ENCODE measurements at regions of chr19 and their contacts with region 1.

Region 1: GRCh38 chr19:14347999-14348889 is 33.0 kb upstream of the ADGRE5 start:
- DNase-seq: peak; percentile 61 to 75
- ATAC-seq: peak; percentile 72 to 90 (median 84)
- H3K4me3 ChIP-seq: peak overlapping the region in 8 of 10 donors; percentile 14 to 37 (median 28)
- H3K27ac ChIP-seq: no peak overlapping the region
- H3K4me1 ChIP-seq: peaks cover 0 to 12% (median 0%) of the 10 kb centered on the region in 9 donors
- H3K27me3 ChIP-seq: peaks cover 0 to 4% (median 0%) of the 10 kb centered on the region in 7 donors
- CTCF ChIP-seq: peak; percentile 93 to 99 (median 96)

Region 2: GRCh38 chr19:14183741-14184350 is 164.4 kb before region 1 on chr19:
- intact Hi-C with region 1: loop called in 1 of 10 experiments (anchors 10 kb)
- DNase-seq: no peak
- ATAC-seq: peak in 2 of 8 donors; percentile 13 to 14
- H3K4me3 ChIP-seq: no peak overlapping the region
- H3K27ac ChIP-seq: no peak overlapping the region
- H3K4me1 ChIP-seq: peaks cover 0 to 6% (median 0%) of the 10 kb centered on the region in 9 donors
- H3K27me3 ChIP-seq: no peaks in the 10 kb centered on the region
- CTCF ChIP-seq: no peak

Region 3: DNA sequence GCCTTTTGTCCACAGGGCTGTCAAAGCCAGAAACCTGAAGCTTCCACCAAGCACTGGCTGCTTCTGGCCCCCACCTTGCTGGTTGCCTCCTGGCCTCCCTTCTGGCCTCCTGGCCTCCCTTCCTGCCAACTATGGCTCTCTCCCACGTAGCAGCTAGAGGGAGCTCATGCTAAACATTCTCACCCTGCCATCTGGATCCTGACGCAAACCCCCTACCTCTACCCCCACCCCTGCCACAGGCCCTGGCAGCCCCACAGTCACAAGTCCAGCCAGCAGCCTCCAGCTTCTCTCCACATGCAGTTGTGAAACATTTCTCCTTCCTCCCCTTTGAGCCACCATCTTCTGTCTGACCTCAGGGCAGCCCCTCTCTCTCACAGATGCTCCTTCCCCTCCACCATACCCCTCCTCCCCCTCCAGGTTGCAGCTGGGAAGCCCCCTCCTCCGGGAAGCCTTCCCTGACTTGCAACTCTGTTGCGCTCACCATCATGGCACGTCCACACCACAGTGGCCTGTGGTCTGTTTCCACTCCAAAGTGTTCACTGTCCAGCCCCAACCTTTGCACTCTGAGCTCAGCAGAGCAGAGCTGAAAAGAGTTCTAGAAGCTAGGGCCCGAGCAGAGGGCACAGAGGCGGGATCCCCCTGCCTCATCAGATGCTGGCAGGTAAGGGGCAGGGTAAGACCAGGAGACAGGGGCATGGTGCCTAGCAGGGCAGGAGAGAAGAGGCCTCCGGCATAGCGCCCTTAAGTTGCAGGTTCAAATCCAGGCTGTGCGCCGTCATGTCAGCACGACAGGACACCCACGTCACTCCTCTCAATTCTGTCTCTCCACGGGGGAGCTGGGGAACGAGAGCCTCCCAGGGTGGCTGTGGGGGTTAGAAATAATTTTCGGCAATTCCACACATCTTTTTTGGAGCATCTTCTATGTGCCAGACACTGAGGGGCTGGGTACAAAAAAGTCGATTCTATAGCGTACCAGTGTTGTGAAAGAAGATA is 149.6 kb before region 1 on chr19:
- intact Hi-C with region 1: loop called in 6 of 10 experiments (anchors 1 to 5 kb)
- DNase-seq: no peak
- ATAC-seq: no peak
- H3K4me3 ChIP-seq: no peak overlapping the region
- H3K27ac ChIP-seq: no peak overlapping the region
- H3K4me1 ChIP-seq: peaks cover 0 to 14% (median 0%) of the 10 kb centered on the region in 9 donors
- H3K27me3 ChIP-seq: no peaks in the 10 kb centered on the region
- CTCF ChIP-seq: no peak

Region 4: DNA sequence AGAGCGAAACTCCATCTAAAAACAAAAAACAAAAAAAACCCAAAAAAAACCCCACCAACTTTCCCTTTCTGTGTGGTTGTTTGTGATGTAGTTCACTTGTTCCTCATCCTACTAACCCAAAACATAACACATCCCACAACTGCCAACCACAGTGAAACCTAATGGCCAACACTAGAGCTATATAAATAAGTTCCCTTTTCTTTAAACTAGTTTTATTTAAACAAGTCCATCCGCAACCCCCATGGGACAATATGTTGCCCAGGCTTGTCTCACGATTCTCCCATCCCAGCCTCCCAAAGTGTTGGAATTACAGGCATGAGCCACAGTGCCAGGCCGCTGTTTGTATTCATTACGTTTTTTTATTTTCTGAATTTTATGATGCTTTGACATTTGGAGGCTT is 38.2 kb before region 1 on chr19:
- intact Hi-C with region 1: no loop called
- DNase-seq: no peak
- ATAC-seq: no peak
- H3K4me3 ChIP-seq: no peak overlapping the region
- H3K27ac ChIP-seq: no peak overlapping the region
- H3K4me1 ChIP-seq: peaks cover 0 to 8% (median 0%) of the 10 kb centered on the region in 9 donors
- H3K27me3 ChIP-seq: peaks cover 0 to 10% (median 0%) of the 10 kb centered on the region in 7 donors
- CTCF ChIP-seq: no peak

Region 5: DNA sequence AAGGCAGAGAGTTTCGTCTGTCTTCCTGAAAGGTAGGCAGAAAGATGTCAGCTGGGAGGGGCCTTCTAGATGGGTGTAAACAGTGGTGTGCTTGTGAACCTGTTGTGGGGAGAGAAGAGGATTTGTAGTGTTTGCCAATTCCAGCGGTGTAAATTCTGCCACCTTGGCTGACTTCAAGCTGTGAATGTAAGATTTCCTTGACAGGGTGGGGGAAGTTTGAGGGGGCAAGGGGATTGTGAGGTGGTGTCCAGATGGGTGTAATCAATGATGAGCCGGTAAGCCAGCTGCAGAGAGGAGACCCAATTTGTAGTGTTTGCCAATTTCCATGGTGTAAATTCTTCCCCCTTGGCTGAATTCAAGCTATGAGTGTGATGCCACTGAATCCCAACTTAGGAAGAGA is 28.0 kb before region 1 on chr19:
- intact Hi-C with region 1: no loop called
- DNase-seq: no peak
- ATAC-seq: no peak
- H3K4me3 ChIP-seq: no peak overlapping the region
- H3K27ac ChIP-seq: no peak overlapping the region
- H3K4me1 ChIP-seq: no peaks in the 10 kb centered on the region
- H3K27me3 ChIP-seq: peaks cover 0 to 15% (median 0%) of the 10 kb centered on the region in 7 donors
- CTCF ChIP-seq: no peak

Region 6: DNA sequence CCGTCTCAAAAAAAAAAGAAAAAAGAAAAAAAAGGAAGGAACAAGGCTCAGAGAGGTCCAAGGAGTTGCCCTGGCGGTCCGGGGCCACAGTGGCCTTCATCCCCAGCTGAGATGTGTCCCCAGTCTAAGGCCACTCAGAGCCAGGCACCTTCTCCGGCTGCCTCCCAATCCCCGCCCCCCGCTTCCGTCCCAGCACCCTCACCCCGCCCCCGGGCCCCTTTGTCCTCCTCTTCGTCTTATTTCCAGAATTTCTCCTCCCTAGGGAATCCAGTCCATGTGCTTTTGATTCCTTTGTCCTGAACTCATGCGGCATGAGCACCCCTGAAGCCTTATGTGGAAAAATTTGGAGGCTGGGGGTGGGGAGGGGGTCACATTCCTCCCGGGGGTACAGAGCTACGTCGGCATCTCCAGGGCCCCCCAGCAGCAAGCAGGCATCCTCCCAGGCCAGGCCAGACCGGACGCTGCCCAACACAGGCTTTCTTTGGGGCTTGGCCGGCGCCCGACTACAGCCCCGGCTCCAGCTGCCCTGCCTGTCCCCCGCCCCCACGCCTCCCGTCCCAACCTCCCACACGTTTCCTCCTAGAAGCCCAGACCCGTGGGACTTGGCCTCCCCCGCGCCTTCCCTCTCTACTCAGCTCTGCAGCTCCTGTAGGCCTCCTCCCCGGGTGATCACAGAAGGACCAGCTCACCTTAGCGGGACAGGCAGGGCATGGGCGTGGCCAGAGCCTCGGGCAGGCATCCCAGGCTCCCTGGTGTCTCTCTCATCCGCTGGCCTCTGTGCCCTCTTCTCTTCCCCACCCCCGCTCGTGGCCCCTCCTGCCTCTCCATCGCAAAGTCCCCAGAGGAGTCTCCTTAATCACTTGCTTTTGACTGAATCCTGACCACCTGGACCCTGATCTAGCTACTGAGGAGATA is 15.2 kb after region 1 on chr19:
- intact Hi-C with region 1: no loop called
- DNase-seq: peak; percentile 87 to 91
- ATAC-seq: peak; percentile 82 to 95 (median 90)
- H3K4me3 ChIP-seq: peak overlapping the region in 8 of 10 donors; percentile 14 to 50 (median 37)
- H3K27ac ChIP-seq: peak overlapping the region in 9 of 10 donors; percentile 64 to 87 (median 78)
- H3K4me1 ChIP-seq: peaks cover 0 to 68% (median 29%) of the 10 kb centered on the region in 9 donors
- H3K27me3 ChIP-seq: no peaks in the 10 kb centered on the region
- CTCF ChIP-seq: no peak

Region 7: DNA sequence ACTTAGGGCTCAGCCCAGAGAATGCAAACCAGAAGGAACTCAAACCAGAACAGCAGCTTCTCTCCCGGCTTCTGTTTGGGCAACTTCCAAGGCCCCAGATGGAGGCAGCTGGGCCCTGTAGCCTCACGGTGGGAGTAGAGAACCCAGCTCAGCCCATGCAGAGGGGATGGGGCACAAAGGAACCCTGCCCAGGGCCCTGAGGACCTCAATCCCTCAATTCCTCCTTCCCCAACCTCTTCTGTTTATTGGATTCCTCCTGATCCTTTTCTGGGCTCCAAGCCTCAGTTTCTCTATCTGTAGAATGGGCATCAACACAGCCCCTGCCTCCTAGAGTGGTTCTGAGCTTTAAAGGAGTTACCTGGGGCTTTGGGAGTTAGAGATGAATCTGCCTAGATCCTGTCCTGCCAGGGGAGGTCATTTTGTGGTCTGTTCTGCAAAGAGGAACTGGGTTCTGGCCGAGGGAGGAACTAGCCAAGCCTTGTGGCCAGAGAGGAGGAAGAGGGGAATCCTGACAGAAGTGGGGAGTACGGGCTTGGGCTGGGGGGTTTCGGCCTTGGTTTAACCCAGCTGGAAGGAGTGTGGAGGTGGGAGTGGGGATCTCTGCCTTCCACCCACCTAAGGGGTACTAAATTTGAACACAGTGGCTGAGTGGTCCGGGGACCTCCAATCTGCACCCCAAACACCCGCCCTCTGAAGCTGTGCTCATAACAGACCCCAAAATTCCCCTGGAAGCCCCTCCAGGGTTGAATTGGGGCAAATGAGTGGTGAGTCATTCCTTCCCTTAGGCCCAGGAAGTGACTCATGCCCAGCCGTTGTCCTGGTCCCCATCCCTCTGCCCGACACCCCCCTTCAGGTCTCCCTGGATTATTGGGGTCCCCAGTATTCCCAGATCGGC is 35.7 kb after region 1 on chr19:
- intact Hi-C with region 1: no loop called
- DNase-seq: peak; percentile 42 to 51
- ATAC-seq: peak in 3 of 8 donors; percentile 11 to 32 (median 12)
- H3K4me3 ChIP-seq: peak overlapping the region in 9 of 10 donors; percentile 15 to 96 (median 79)
- H3K27ac ChIP-seq: peak overlapping the region; percentile 12 to 96 (median 75)
- H3K4me1 ChIP-seq: peaks cover 7 to 86% (median 51%) of the 10 kb centered on the region in 9 donors
- H3K27me3 ChIP-seq: no peaks in the 10 kb centered on the region
- CTCF ChIP-seq: no peak